ENCODE measurements at regions of chr3 and their contacts with region 1.

Region 1: DNA sequence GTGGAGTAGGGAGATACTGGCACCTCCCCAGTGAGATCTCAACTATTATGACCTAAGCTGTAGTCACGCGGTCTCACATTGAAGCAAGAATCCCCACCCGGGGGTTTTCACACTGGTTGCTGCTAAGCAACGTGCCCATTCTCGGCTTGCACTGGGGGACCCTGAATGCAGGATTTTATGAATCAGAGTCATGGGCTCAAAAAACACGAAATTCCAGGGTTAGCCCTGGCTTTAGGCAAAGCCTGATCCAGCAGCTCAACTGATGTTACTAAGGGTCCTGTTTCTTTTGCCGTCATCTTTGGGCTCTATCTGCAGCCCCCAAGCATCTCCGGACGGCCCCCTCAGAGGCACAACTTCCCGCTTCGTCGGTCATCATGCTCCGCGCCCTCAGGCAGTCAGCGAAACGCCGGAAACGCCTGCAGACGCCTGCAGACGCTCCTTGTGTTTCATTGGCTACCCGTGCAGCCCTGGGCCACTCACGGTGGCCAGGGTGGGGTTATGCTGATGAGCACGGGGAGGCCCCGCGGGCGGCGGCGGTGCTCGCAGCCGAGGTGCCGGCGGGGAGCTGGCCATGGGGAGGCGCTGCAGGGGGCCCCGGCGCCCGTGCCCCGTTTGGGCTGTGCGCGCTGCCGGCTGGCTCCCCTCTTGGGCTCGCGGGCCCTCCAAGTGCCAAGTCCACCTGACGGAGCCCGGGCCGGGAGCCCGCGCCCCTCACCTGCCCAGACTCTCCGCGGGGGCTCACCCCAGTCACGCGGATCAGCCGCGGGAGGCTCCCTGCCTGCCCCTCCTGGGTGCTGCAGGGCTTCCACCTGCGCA is 25.8 kb downstream of the EFCC1 start:
- DNase-seq: peak; percentile 96
- H3K4me3 Mint-ChIP-seq: peak overlapping the region; percentile 77
- H3K27ac Mint-ChIP-seq: peak overlapping the region; percentile 82
- H3K4me1 Mint-ChIP-seq: peaks cover 7% of the 10 kb centered on the region
- H3K27me3 Mint-ChIP-seq: no peaks in the 10 kb centered on the region

Region 2: GRCh38 chr3:128879125-128879969 is 147.6 kb before region 1 on chr3 and contains the start of gene ACAD9:
- CTCF ChIA-PET with region 1: interaction called, 3 read pairs
- intact Hi-C with region 1: loop called (anchors 1 kb)
- DNase-seq: peak; percentile 96
- H3K4me3 Mint-ChIP-seq: peak within 1 kb of the TSS; percentile 84
- H3K27ac Mint-ChIP-seq: peak within 1 kb of the TSS; percentile 90
- H3K4me1 Mint-ChIP-seq: peaks cover 67% of the 10 kb centered on the region
- H3K27me3 Mint-ChIP-seq: no peaks in the 10 kb centered on the region
- total RNA-seq, gene ACAD9: 37.0 to 40.6 TPM

Region 3: GRCh38 chr3:129003578-129004160 is 23.3 kb before region 1 on chr3:
- CTCF ChIA-PET with region 1: interaction called, 8 read pairs
- intact Hi-C with region 1: loop called (anchors 1 kb)
- DNase-seq: peak; percentile 69
- H3K4me3 Mint-ChIP-seq: peak overlapping the region; percentile 53
- H3K27ac Mint-ChIP-seq: no peak overlapping the region
- H3K4me1 Mint-ChIP-seq: peaks cover 36% of the 10 kb centered on the region
- H3K27me3 Mint-ChIP-seq: peaks cover 21% of the 10 kb centered on the region

Region 4: DNA sequence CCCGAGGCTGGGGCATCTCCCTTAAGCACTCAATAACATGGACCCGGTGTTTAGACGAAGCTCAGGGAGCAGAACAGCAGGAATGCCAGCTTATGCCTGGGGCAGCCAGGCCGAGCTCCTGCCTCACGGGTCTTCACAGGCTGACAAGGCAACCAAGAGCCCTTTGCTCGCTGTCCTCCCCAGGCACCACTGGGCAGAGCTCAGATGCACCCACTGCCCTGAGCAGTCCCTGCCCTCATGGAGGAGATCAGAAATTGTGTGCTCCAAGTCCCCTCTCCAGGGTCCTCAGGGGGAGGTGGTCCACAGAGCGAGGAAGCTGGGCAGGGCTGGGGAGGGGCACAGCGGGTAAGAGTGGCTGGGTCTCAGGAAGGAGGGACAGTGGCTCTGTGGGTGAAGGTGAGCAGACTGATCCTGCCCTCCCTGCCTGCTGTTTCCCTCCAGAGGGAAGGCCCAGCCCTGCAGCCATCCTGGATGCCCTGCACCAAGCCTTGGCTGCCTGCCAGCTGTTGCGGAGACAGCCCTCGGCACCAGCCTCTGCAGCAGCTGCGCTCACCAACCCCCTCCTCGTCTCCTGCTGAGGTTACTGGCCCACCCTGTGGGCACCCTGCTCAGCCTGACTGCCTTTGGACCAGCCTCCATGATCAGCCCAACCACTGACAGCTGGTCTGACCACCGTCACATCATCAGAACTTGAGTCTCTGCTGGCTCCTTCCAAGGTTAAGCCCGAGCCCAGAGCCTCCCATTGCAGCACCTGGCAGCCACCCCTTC is 12.5 kb after region 1 on chr3:
- CTCF ChIA-PET with region 1: interaction called, 17 read pairs
- intact Hi-C with region 1: no loop called
- DNase-seq: no peak
- H3K4me3 Mint-ChIP-seq: no peak overlapping the region
- H3K27ac Mint-ChIP-seq: no peak overlapping the region
- H3K4me1 Mint-ChIP-seq: peaks cover 16% of the 10 kb centered on the region
- H3K27me3 Mint-ChIP-seq: peaks cover 1% of the 10 kb centered on the region

Region 5: DNA sequence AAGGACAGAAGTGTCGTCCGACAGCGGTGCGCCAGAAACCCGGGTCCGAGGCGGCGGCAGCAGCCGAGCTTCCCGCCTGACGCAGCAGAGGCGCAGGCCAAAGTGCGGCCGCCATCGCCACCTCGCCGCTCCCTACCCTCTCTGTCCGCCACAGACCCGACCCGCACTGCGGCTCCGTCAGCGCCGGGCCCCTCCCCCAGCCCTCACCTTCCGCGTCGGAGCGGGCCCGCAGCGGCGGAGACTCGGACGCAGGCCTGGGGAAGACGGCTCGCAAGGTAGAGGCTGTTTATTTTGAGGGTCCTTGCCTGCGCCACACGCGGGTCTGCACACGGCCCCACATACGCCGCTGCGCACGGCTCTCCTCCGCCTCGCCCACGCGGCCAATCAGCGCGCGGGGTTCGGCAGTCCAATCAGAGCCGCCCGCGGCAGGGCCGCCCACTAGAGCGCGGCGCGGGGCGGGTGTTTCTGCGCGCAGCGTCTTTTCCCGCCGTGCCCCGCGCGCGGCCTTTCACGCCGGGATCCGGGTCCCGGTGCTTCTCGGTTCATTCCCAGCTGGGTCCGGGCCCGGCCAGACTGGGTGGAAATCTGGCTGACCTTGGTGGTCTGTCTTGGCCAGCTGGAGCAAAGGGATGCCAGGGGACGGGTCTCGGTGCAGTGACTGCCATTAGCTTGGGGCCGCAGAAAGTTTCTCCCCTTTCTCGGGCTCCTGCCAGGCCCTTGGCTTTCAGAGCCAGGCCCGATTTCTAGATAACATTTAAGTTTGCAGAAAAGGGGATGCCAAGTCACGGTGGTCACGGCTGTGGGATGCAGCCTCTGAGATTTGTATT is 156.8 kb after region 1 on chr3 and contains the start of gene CNBP:
- CTCF ChIA-PET with region 1: no interaction called
- intact Hi-C with region 1: loop called (anchors 1 kb)
- DNase-seq: peak; percentile 93
- H3K4me3 Mint-ChIP-seq: peak within 1 kb of the TSS; percentile 96
- H3K27ac Mint-ChIP-seq: peak within 1 kb of the TSS; percentile 95
- H3K4me1 Mint-ChIP-seq: peaks cover 35% of the 10 kb centered on the region
- H3K27me3 Mint-ChIP-seq: no peaks in the 10 kb centered on the region
- total RNA-seq, gene CNBP: 490 to 500 TPM

Region 6: DNA sequence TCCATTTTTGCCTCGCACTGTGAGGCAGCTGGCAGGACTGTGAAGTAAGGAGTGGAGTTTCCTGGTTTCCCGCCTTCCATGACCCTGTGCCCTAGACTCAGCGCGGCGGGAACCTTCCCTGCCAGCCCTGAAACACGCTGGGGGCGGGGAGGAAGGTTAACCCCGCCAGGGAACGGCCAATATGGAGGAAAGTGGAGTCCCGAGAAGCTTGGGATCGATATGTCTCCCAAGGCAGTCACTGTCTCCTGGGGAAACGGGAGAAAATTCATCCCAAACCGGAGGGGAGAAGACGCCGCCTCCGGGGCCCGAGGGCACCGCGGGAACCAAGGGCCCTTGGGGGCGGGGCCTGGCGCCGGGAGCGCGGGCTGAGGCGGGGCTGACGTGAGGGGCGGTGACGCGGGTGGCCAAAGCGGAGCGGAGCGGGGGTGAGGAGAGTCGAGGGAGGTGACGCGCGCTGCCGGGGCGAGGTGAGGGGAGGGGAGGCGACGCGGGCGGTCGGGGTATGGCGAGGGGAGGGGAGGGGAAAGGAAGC is 251.6 kb after region 1 on chr3 and contains the start of gene HMCES:
- CTCF ChIA-PET with region 1: no interaction called
- intact Hi-C with region 1: loop called (anchors 1 kb)
- DNase-seq: peak; percentile 96
- H3K4me3 Mint-ChIP-seq: peak within 1 kb of the TSS; percentile 87
- H3K27ac Mint-ChIP-seq: peak within 1 kb of the TSS; percentile 90
- H3K4me1 Mint-ChIP-seq: peaks cover 48% of the 10 kb centered on the region
- H3K27me3 Mint-ChIP-seq: no peaks in the 10 kb centered on the region
- total RNA-seq, gene HMCES: 35.0 to 35.8 TPM